Mammary epithelial cell (primary cell): ENCODE measurements at regions of chr20 and their contacts with region 1.

Region 1: GRCh38 chr20:44310664-44311639 is at the start of gene FITM2:
- DNase-seq: peak; percentile 95
- H3K4me3 ChIP-seq: peak within 1 kb of the TSS; percentile 79 to 97 (median 81)
- H3K27ac ChIP-seq: peak within 1 kb of the TSS; percentile 35
- H3K4me1 ChIP-seq: peaks cover 11% of the 10 kb centered on the region
- H3K27me3 ChIP-seq: no peaks in the 10 kb centered on the region
- CTCF ChIP-seq: peak; percentile 85 to 98
- total RNA-seq, gene FITM2: 7.6 to 10.3 TPM

Region 2: GRCh38 chr20:44080646-44081267 is 230.2 kb before region 1 on chr20:
- CTCF ChIA-PET with region 1: no interaction called
- dilution Hi-C with region 1: no loop called
- in situ Hi-C with region 1: no loop called
- intact Hi-C with region 1: no loop called
- DNase-seq: peak; percentile 57
- H3K4me3 ChIP-seq: no peak overlapping the region
- H3K27ac ChIP-seq: no peak overlapping the region
- H3K4me1 ChIP-seq: peaks cover 8% of the 10 kb centered on the region
- H3K27me3 ChIP-seq: no peaks in the 10 kb centered on the region
- CTCF ChIP-seq: peak; percentile 92 to 100

Region 3: DNA sequence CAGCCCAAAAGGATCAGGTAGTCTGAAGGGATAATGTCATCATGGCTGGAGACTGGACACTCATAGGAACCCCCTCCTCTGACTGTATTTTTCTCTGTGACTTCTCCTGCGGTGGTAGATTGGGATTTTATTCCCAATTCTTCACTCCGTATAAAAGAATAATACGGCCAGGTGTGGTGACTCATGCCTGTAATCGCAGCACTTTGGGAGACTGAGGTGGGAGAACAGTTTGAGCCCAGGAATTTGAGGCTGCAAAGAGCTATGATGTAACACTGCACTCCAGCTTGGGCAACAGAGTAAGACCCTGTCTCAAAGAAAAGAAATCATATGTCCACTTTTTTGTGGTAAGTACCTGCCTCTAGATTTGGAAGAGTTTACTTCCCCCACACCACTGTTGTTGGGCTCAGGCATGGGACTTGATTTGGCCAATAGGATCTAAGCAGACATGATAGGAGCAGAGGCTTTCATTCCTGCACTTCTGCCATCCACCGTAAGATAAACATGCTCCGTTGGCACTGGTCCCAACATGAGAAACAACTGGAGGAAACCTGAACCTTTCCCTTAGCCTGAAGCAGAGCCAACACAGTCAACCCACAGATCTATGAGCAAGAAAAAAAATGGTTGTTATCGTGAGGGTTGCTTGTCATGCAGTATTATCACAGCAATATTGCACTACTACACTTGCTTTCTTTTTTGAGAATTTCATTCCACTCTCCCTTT is 206.0 kb before region 1 on chr20:
- CTCF ChIA-PET with region 1: no interaction called
- dilution Hi-C with region 1: no loop called
- in situ Hi-C with region 1: loop called (anchors 10 to 25 kb)
- intact Hi-C with region 1: no loop called
- DNase-seq: peak; percentile 72
- H3K4me3 ChIP-seq: no peak overlapping the region
- H3K27ac ChIP-seq: no peak overlapping the region
- H3K4me1 ChIP-seq: peaks cover 14% of the 10 kb centered on the region
- H3K27me3 ChIP-seq: no peaks in the 10 kb centered on the region
- CTCF ChIP-seq: no peak

Region 4: DNA sequence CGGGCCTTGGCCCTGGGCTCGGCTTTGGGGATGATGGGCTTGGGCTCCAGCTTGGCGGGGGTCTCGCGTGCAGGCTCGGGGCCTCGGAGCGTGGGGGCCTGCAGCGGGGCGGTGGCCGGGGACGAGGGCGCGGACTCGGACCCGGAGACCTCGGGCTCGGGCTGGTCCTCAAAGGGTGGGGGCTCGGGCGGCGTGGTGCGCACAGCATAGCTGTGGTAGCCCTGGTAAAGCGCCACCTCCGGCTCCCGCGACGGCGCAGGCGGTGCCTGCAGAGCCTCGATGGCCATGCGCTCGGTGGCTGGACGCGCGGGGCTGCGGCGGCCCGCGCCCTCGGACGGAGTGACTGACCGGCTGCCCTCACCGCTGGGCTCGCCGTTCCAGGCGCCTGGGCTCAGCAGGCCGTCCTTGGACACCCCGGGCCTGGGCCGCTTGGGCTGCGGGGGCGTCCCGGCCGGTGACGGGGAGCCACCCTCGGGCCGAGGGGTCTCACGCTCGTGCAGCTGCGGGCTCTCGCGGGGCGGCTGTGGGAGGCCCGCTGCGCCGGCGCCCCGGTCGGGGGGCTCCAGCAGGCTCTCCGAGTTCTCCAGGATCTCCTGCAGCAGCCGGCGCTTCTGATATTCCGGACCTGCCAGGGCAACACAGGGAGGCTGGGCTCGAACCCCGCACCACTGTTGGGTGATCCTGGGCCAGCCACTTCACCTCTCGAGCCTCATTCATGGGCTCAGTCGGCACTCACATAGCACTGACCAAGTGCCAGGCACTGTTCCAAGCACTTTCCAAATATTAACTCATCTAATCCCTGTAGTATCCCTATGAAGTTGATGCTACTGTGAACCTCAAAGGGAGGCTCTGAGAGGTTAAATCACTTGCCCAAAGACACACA is 194.9 kb before region 1 on chr20:
- CTCF ChIA-PET with region 1: no interaction called
- dilution Hi-C with region 1: no loop called
- in situ Hi-C with region 1: loop called (anchors 10 to 25 kb)
- intact Hi-C with region 1: loop called (anchors 1 kb)
- DNase-seq: no peak
- H3K4me3 ChIP-seq: no peak overlapping the region
- H3K27ac ChIP-seq: no peak overlapping the region
- H3K4me1 ChIP-seq: peaks cover 11% of the 10 kb centered on the region
- H3K27me3 ChIP-seq: no peaks in the 10 kb centered on the region
- CTCF ChIP-seq: no peak

Region 5: GRCh38 chr20:44210422-44211176 is 100.4 kb before region 1 on chr20 and contains the start of gene OSER1:
- CTCF ChIA-PET with region 1: interaction called, 3 read pairs
- dilution Hi-C with region 1: no loop called
- in situ Hi-C with region 1: loop called (anchors 5 kb)
- intact Hi-C with region 1: no loop called
- DNase-seq: peak; percentile 98
- H3K4me3 ChIP-seq: peak within 1 kb of the TSS; percentile 76 to 99 (median 97)
- H3K27ac ChIP-seq: peak within 1 kb of the TSS; percentile 97
- H3K4me1 ChIP-seq: peaks cover 39% of the 10 kb centered on the region
- H3K27me3 ChIP-seq: no peaks in the 10 kb centered on the region
- CTCF ChIP-seq: no peak
- total RNA-seq, gene OSER1: 18.5 to 29.5 TPM

Region 6: DNA sequence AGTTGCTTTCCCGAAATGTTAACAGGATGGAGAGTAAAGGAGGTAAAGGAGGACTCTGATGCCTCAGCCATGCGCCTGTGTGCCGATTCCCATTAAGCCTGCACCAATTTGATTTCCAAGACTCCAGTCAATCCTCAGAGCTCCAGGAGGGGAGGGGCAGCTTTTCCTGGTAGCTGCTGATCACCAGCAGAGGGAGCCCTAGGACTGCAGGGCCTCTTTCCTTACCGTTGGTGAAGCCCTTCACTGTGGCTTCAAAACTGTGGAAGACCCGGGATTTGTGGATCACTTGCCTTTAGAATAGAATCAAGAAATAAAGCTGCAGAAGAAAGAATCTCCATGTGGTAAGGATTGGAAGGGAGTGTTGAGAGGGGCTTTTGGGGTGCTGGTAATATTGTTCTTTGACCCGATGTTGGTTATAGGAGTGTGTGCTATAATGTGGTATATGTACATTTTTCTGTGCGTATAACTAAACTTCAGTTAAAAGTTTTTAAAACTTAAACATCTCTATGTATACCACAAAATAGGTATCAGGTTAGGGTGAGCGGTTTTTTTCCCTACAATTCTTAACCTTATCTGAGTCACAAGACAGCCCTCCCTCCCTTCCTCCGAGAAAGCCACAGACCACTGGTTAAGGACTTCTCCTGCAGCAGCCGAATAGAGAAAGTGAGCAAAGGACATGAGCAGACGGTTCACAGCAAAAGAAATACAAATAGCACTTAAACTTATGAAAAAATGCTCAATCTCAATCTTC is 93.4 kb before region 1 on chr20:
- CTCF ChIA-PET with region 1: interaction called, 13 read pairs
- dilution Hi-C with region 1: no loop called
- in situ Hi-C with region 1: loop called (anchors 5 kb)
- intact Hi-C with region 1: loop called (anchors 1 kb)
- DNase-seq: peak; percentile 52
- H3K4me3 ChIP-seq: no peak overlapping the region
- H3K27ac ChIP-seq: no peak overlapping the region
- H3K4me1 ChIP-seq: peaks cover 7% of the 10 kb centered on the region
- H3K27me3 ChIP-seq: no peaks in the 10 kb centered on the region
- CTCF ChIP-seq: peak; percentile 96 to 99